Activated CD4-positive, alpha-beta T cell treated with anti-CD3 and anti-CD28 coated beads, Interleukin-2, amount 10 ng/mL, durations not matched to agents 7 days and 5 days (primary cell): ENCODE measurements at regions of chr2 and their contacts with region 1.

Region 1: DNA sequence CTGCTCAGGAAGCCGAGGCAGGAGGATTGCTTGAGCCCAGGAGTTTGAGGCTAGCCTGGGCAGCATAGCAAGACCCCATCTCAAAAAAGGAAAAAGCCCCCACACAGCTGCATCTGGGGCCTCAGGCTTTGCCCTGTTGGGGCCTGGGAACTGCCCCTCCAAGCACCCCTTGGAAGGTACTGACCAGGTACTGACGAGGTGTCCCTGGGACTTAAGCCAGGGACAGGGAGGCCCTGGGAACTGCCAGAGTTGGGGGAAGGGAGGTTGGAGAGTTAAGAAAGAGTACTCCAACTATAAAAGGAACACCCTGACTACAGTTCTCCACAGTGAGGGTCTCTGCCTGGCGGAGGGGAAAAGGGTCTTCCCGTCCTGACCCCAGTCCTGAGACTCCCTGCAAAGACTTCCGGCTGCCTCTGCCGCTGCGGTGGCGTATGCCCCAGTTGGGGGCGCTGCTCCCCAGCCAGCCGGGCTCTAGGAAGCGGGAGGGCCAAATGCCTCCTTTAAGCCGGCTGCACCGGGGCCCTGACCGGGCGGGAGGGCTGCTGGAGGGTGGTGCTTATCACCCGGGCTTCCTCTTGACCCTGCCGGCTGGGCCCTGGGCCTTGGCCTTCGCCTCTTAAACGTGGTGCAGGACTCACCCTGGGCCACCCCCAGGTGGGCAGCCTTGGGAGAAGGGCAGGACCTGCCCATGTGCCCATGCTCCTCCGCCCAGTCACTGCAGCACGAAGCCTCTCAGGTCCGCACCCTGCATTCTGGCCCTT is 12.8 kb downstream of the SLC30A3 start:
- DNase-seq: peak; percentile 45
- H3K4me3 Mint-ChIP-seq: no peak overlapping the region
- H3K27ac Mint-ChIP-seq: no peak overlapping the region
- H3K4me1 Mint-ChIP-seq: no peaks in the 10 kb centered on the region
- H3K27me3 Mint-ChIP-seq: peaks cover 16% of the 10 kb centered on the region

Region 2: DNA sequence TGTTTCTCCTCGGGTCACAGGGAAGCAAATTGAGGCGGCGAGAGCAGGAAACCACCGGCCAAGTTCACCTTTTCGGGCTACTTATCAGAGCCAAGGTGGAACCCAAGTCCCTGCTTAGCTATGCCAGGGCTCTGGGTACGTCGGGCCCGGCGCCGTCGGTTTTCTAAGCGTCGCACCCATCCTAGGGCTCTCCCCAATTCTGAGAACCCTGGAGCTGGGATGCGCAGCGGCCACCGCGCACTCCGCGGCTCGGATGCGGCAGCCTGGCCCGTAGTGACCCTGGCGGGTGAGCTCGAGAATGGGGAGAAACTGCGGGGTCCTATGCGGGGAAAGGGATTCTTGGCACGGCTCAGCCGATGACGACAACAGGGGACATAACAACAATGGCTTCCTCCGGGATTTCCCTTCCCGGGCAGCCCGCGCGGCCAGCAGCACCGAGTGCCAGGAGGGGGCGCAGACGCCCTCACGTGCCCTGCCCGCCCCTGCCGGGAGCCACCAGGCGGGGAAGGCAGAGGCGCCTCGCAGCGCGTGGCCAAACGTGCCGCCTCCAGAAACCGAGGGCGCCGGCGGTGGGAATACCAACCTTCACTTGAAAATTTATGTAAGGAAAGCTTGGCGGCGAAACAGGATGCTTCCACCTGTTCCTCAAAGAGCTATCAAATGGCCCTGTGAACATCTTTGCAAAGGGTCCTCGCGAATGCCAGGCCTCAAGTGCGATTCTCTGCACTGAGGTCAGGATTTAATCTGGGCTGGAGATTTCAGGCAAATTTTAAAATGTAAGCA is 14.9 kb after region 1 on chr2:
- CTCF ChIA-PET with region 1: interaction called, 15 read pairs
- POLR2A ChIA-PET with region 1: no interaction called
- DNase-seq: peak; percentile 51
- H3K4me3 Mint-ChIP-seq: peak overlapping the region; percentile 39
- H3K27ac Mint-ChIP-seq: no peak overlapping the region
- H3K4me1 Mint-ChIP-seq: peaks cover 27% of the 10 kb centered on the region
- H3K27me3 Mint-ChIP-seq: peaks cover 45% of the 10 kb centered on the region